ENCODE measurements at regions of chr1 and their contacts with region 1.

Region 1: DNA sequence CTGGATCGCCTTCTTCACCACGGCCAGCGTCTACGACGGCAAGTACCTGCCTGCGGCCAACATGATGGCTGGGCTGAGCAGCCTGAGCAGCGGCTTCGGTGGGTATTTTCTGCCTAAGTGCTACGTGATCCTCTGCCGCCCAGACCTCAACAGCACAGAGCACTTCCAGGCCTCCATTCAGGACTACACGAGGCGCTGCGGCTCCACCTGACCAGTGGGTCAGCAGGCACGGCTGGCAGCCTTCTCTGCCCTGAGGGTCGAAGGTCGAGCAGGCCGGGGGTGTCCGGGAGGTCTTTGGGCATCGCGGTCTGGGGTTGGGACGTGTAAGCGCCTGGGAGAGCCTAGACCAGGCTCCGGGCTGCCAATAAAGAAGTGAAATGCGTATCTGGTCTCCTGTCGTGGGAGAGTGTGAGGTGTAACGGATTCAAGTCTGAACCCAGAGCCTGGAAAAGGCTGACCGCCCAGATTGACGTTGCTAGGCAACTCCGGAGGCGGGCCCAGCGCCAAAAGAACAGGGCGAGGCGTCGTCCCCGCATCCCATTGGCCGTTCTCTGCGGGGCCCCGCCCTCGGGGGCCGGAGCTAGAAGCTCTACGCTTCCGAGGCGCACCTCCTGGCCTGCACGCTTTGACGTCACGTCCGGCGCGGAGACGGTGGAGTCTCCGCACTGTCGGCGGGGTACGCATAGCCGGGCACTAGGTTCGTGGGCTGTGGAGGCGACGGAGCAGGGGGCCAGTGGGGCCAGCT is at the start of gene ZBTB48:
- DNase-seq: peak; percentile 100
- total RNA-seq, gene ZBTB48: 10.7 TPM

Region 2: GRCh38 chr1:6602669-6603237 is 23.2 kb after region 1 on chr1 and contains the start of gene KLHL21:
- intact Hi-C with region 1: loop called (anchors 1 kb)
- DNase-seq: peak; percentile 95
- total RNA-seq, gene KLHL21: 33.1 TPM

Region 3: DNA sequence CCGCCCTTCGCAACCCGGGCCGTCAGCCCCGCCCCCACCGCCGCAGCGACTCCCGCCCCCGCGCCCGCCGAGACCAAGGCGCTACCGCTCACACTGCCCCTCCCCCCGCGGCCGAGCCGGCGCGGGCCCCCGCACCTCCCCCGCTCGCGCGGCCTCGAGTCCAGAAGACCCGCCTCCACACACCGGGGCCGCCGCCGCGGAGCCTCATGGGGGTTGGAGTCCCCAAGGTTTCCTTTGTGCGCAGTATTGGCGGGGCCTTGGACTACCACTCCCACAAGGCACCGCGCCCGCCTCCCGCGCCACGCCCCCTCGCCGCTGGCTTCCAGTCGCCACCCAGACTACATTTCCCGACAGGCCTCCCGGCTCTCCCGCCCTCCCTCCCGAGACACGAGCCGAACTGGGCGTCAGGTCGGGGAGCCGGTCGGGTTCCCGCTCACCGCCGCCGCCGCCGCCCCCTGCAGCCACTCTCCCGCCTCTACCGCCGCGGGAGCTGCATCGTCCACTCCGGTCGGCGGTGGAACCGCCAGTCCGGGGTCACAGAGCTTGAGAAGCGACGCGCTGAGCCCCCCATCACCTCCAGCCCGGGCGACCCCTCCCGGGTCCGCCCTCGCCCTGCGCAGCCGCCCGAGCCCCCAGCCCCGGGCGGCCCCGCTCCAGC is 33.9 kb after region 1 on chr1 and contains the start of gene PHF13:
- intact Hi-C with region 1: loop called (anchors 1 kb)
- DNase-seq: peak; percentile 100
- total RNA-seq, gene PHF13: 9.3 TPM

Region 4: GRCh38 chr1:6935361-6935883 is 355.9 kb after region 1 on chr1:
- intact Hi-C with region 1: no loop called
- DNase-seq: no peak

Measured in cardiac septum (tissue), 1 donor.